Activated CD8-positive, alpha-beta T cell treated with anti-CD3 and anti-CD28 coated beads for 36 hours (primary cell): ENCODE measurements at regions of chr12 and their contacts with region 1.

Region 1: DNA sequence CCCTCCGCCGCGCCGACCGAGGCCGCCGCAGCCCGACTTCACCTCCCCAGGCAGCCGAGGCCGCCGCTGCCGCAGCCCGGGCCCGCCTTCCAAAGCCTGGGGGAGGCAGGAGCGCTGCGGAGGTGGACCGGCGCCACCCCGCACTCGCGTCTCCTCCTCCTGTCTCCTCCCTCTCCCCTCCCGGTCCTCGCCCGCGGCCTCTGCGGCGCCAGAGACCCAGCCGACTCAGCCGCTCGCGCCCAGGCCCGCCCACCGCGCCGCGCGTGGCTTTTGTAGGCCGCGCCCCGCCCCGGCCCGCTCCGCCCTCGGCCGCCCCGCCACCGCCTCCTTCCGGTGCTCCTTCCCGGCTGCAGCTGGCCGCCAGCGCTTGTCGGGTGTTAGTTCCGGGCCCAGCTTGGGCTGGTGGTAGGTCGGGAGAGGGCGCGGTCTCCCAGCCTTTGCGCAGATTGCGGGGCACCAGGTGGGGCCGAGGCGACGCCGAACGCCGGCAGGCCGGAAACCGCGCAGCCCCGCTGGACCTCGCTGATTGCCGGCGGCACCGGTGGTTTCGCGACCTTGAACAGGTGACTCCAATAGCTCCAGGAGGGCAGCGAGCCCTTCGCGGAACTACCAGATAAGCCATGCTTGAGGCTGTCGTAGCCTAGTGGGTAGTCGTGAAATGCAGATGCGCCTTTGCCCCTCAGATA is at the start of gene CAPRIN2:
- DNase-seq: peak; percentile 93
- ATAC-seq: peak; percentile 92
- H3K4me3 Mint-ChIP-seq: peak within 1 kb of the TSS; percentile 96
- H3K27ac Mint-ChIP-seq: peak within 1 kb of the TSS; percentile 79
- H3K4me1 Mint-ChIP-seq: peaks cover 34% of the 10 kb centered on the region
- H3K27me3 Mint-ChIP-seq: no peaks in the 10 kb centered on the region
- CTCF ChIP-seq: no peak
- total RNA-seq, gene CAPRIN2: 8.1 to 11.7 TPM

Region 2: GRCh38 chr12:30695199-30696103 is 59.4 kb before region 1 on chr12 and contains the start of gene IPO8:
- CTCF ChIA-PET with region 1: interaction called, 4 read pairs
- POLR2A ChIA-PET with region 1: interaction called, 11 read pairs
- intact Hi-C with region 1: no loop called
- DNase-seq: peak; percentile 92
- ATAC-seq: peak; percentile 92
- H3K4me3 Mint-ChIP-seq: peak within 1 kb of the TSS; percentile 89
- H3K27ac Mint-ChIP-seq: peak within 1 kb of the TSS; percentile 92
- H3K4me1 Mint-ChIP-seq: peaks cover 33% of the 10 kb centered on the region
- H3K27me3 Mint-ChIP-seq: peaks cover 1% of the 10 kb centered on the region
- CTCF ChIP-seq: peak; percentile 40
- total RNA-seq, gene IPO8: 40.2 to 47.7 TPM

Region 3: DNA sequence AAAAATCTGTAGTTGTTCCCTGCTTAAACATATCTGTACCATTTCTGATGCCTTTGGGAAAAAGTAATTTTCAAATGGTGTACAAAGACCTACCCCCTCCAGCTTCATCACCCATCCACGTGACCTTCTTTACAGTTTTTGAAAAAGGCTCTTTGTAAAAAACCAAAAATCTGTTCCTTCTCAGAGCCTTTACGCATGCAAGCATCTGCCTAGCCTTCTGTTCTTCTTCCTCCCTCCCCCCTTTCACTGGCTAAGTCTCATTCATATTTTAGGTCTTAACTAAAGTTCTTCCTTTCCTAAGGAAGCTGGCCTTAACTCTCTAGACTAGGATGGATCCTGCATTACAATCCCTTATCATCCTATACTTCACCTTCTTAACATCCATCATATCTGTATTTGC is 10.5 kb before region 1 on chr12:
- CTCF ChIA-PET with region 1: interaction called, 13 read pairs
- POLR2A ChIA-PET with region 1: interaction called, 3 read pairs
- intact Hi-C with region 1: no loop called
- DNase-seq: no peak
- ATAC-seq: no peak
- H3K4me3 Mint-ChIP-seq: no peak overlapping the region
- H3K27ac Mint-ChIP-seq: no peak overlapping the region
- H3K4me1 Mint-ChIP-seq: peaks cover 8% of the 10 kb centered on the region
- H3K27me3 Mint-ChIP-seq: no peaks in the 10 kb centered on the region
- CTCF ChIP-seq: no peak

Region 4: GRCh38 chr12:30795410-30796312 is 40.8 kb after region 1 on chr12:
- CTCF ChIA-PET with region 1: interaction called, 8 read pairs
- POLR2A ChIA-PET with region 1: interaction called, 6 read pairs
- intact Hi-C with region 1: loop called (anchors 1 kb)
- DNase-seq: peak; percentile 88
- ATAC-seq: peak; percentile 78
- H3K4me3 Mint-ChIP-seq: peak overlapping the region; percentile 75
- H3K27ac Mint-ChIP-seq: peak overlapping the region; percentile 70
- H3K4me1 Mint-ChIP-seq: peaks cover 14% of the 10 kb centered on the region
- H3K27me3 Mint-ChIP-seq: peaks cover 36% of the 10 kb centered on the region
- CTCF ChIP-seq: no peak

Region 5: DNA sequence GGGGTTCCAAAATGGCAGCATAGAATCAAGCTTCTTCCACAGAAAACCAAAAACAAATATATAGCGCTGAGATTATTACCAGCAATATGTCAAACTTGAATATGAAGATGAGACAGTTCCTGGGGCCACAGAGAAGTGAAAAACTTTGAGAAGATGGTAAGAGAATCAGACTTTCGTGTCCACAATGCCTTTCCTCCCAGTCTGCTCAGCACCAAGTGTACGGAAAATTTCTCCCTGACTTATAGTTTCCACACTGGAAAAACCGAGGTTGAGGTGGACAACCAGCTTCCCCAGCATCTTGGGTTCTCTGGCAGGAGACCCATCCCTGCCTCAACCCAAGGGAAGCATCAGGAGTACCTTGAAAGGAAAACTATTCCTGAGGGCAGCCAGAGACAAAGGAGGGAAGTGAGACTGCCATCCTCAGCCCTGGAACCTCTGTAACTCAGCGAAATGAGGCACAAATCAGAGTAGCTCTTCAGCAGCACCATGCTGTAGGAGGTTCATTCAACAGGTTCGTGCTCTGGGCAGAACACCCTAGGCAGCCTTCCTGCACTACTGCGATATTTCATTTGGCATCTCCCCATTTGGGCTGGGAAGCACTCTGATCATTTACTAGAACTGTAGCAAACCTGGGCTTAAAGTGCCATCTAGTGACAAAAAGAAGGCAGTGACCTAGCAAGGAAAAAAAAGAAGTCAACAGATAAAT is 52.3 kb after region 1 on chr12:
- CTCF ChIA-PET with region 1: interaction called, 31 read pairs
- POLR2A ChIA-PET with region 1: no interaction called
- intact Hi-C with region 1: no loop called
- DNase-seq: peak; percentile 21
- ATAC-seq: peak; percentile 73
- H3K4me3 Mint-ChIP-seq: no peak overlapping the region
- H3K27ac Mint-ChIP-seq: no peak overlapping the region
- H3K4me1 Mint-ChIP-seq: no peaks in the 10 kb centered on the region
- H3K27me3 Mint-ChIP-seq: peaks cover 11% of the 10 kb centered on the region
- CTCF ChIP-seq: peak; percentile 82